HEK293 (cell line): ENCODE measurements at regions of chr10 and their contacts with region 1.

Region 1: GRCh38 chr10:128211953-128212727 is 85.9 kb upstream of the MKI67 start:
- H3K4me3 ChIP-seq: no peak overlapping the region
- H3K27ac ChIP-seq: no peak overlapping the region
- H3K4me1 ChIP-seq: no peaks in the 10 kb centered on the region
- CTCF ChIP-seq: peak; percentile 92

Region 2: DNA sequence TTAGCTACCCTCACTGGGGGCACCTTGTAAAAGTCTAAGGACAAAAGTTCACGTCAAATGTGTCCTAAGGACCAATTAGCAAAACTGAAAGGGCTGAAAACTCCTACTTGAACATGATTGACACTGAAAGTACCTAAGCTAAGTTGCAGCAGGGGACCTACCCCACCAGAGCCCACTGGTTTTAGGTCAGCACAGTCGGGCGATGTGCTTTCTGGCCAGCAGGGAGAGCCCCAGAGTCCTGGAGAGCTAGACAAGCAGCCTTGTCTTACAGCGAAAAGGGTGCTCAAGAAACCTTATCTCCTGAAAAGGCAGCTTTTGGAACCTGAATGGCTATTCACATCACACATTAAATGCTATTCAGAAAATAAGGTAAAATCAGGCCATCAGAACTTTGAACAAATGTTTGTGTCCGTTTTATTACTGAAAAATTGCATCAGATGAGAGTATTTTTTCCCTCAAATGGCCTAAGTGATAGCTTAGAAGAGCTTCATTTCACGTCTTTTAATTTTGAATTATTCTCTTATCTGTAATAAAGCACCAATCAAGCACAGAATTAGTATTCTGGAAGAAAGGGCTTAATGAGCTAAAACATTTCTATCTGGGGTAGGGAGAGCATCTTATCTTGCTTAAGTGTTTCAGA is 33.7 kb before region 1 on chr10:
- CTCF ChIA-PET with region 1: interaction called, 15 read pairs
- POLR2A ChIA-PET with region 1: no interaction called
- H3K4me3 ChIP-seq: no peak overlapping the region
- H3K27ac ChIP-seq: no peak overlapping the region
- H3K4me1 ChIP-seq: no peaks in the 10 kb centered on the region
- CTCF ChIP-seq: no peak

Region 3: GRCh38 chr10:128185627-128186026 is 26.5 kb before region 1 on chr10:
- CTCF ChIA-PET with region 1: interaction called, 15 read pairs
- POLR2A ChIA-PET with region 1: no interaction called
- H3K4me3 ChIP-seq: no peak overlapping the region
- H3K27ac ChIP-seq: no peak overlapping the region
- H3K4me1 ChIP-seq: no peaks in the 10 kb centered on the region
- CTCF ChIP-seq: no peak

Region 4: DNA sequence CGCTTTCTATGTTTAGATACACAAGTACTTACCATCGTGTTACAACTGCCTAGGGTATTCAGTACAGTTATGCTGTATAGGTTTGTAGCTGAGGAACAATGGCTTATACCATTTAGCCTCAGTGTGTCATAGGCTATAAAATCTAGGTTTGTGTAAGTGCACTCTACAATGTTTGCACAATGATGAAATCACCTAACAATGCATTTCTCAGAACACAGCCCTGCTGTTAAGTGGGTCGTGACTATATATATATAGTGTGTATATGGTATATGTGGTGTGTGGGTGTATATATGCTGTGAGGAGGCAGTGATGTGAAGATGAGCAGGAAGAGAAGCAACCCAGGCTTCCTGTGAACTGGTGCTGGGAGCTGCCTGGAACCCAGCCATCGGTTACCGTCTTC is 20.3 kb before region 1 on chr10:
- CTCF ChIA-PET with region 1: interaction called, 21 read pairs
- POLR2A ChIA-PET with region 1: no interaction called
- H3K4me3 ChIP-seq: no peak overlapping the region
- H3K27ac ChIP-seq: no peak overlapping the region
- H3K4me1 ChIP-seq: no peaks in the 10 kb centered on the region
- CTCF ChIP-seq: no peak

Region 5: DNA sequence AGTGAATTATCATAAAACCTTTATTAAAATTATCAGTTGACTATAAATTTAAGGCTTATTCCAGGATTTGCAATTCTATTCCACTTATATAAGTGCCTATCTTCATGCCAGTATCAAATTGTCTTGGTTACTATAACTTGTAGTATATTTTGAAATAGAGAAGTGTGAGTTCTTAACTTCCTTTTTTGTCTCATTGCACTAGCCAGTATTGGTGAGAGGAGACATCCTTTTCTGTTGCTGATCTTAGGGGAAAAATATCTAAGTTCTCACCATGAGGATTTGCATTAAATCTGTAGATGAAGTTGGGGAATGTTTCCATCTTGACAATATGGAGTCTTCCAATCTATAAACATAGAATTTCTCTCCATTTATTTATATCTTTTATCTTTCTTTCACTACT is 18.3 kb after region 1 on chr10:
- CTCF ChIA-PET with region 1: interaction called, 10 read pairs
- POLR2A ChIA-PET with region 1: no interaction called
- H3K4me3 ChIP-seq: no peak overlapping the region
- H3K27ac ChIP-seq: no peak overlapping the region
- H3K4me1 ChIP-seq: no peaks in the 10 kb centered on the region
- CTCF ChIP-seq: no peak